ENCODE measurements at regions of chr9 and their contacts with region 1.

Region 1: GRCh38 chr9:127545196-127546124 is 66.6 kb upstream of the STXBP1 start:
- DNase-seq: peak; percentile 93 to 94
- ATAC-seq: peak; percentile 76 to 87
- H3K4me3 ChIP-seq: peak overlapping the region; percentile 11; the same call in 1 of the 3 replicates
- H3K27ac ChIP-seq: peak overlapping the region; percentile 94 to 96
- H3K4me1 ChIP-seq: peaks cover 91% of the 10 kb centered on the region
- CTCF ChIP-seq: no peak
- EP300 ChIP-seq: peak; percentile 44 to 67; a peak in 3 of 5 replicates
- POLR2A ChIP-seq: no peak
- RAD21 ChIP-seq: peak in 1 of 2 experiments; percentile 24; a peak in 4 of 5 replicates

Region 2: GRCh38 chr9:127495906-127496421 is 49.5 kb before region 1 on chr9:
- CTCF ChIA-PET with region 1: no interaction called
- POLR2A ChIA-PET with region 1: no interaction called
- DNase-seq: no peak
- ATAC-seq: peak in 1 of 2 experiments; percentile 3; a peak in 1 of 6 replicates
- H3K4me3 ChIP-seq: no peak overlapping the region
- H3K27ac ChIP-seq: no peak overlapping the region
- H3K4me1 ChIP-seq: no peaks in the 10 kb centered on the region
- CTCF ChIP-seq: no peak
- EP300 ChIP-seq: no peak
- POLR2A ChIP-seq: no peak
- RAD21 ChIP-seq: no peak

Region 3: GRCh38 chr9:127519301-127520166 is 25.9 kb before region 1 on chr9:
- CTCF ChIA-PET with region 1: interaction called, 87 read pairs
- POLR2A ChIA-PET with region 1: no interaction called
- DNase-seq: no peak
- ATAC-seq: peak; percentile 58 to 75
- H3K4me3 ChIP-seq: no peak overlapping the region
- H3K27ac ChIP-seq: peak overlapping the region; percentile 71 to 91
- H3K4me1 ChIP-seq: peaks cover 45% of the 10 kb centered on the region
- CTCF ChIP-seq: no peak
- EP300 ChIP-seq: 0 out of 5 replicates have a peak, but pooled peaks of 1 of the 2 experiments have one; percentile 22
- POLR2A ChIP-seq: no peak
- RAD21 ChIP-seq: no peak

Region 4: DNA sequence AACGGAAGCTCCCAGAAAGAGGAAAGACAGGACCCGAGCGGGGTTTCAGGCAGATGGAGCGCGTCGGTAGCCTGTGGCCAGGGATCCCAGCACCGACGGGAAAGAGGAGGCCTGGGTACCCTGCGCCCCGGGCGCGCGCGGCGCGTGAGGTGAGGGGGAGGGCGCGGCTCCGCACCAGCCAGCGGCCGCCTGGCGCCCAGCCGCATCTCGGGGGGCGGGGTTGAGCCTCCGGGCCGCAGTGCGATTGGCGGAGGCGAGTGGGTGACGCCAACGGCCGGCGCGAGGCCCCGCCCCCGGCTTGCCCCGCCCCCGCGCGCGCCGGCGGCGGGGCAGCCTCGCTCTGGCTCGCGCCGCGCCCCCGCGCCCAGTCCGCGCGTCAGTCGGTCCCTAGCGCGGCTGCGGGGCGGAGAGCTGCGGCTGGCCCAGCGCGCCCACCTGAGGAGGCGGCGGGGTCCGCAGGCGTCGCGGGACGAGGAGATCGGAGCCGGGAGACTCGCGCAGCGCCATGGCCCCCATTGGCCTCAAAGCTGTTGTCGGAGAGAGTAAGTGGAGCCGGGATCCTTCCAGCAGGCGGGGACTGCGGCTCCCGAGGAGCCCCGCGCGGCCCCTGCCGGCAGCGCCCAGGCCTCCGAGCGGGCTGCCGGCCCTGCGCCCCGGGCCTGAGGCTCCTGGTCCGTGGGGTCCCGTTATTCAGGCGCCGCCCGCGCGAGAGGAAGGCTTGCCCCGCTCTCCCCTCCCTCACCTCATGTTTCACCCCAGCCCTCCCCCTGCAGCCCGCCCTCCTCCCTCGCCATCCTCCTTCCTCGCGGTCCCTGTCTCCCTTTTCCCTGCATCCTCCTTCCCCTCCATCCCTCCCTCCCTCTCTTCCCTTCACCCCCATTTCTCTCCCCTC is 66.7 kb after region 1 on chr9 and contains the start of gene STXBP1:
- CTCF ChIA-PET with region 1: no interaction called
- POLR2A ChIA-PET with region 1: no interaction called
- DNase-seq: peak; percentile 81 to 84
- ATAC-seq: peak; percentile 72 to 74
- H3K4me3 ChIP-seq: peak within 1 kb of the TSS; percentile 77
- H3K27ac ChIP-seq: peak within 1 kb of the TSS; percentile 73 to 96
- H3K4me1 ChIP-seq: peaks cover 23% of the 10 kb centered on the region
- CTCF ChIP-seq: 0 out of 3 replicates have a peak, but pooled peaks have one; percentile 10
- EP300 ChIP-seq: no peak
- POLR2A ChIP-seq: peak; percentile 59
- RAD21 ChIP-seq: no peak
- polyA plus RNA-seq, gene STXBP1: 13.3 and 20.4 TPM in 2 replicates

Measured in A549 (cell line).